Activated T-helper 1 cell treated with anti-CD3 and anti-CD28 coated beads, Interleukin-12 subunit alpha, Interleukin-12 subunit beta, Interleukin-2, Interleukin-4 antibody, amounts not matched to agents 30 ng/mL and 10 ng/mL and 1 ng/mL, durations not matched to agents 14 hours and 24 hours and 36 hours (primary cell): ENCODE measurements at regions of chr9 and their contacts with region 1.

Region 1: DNA sequence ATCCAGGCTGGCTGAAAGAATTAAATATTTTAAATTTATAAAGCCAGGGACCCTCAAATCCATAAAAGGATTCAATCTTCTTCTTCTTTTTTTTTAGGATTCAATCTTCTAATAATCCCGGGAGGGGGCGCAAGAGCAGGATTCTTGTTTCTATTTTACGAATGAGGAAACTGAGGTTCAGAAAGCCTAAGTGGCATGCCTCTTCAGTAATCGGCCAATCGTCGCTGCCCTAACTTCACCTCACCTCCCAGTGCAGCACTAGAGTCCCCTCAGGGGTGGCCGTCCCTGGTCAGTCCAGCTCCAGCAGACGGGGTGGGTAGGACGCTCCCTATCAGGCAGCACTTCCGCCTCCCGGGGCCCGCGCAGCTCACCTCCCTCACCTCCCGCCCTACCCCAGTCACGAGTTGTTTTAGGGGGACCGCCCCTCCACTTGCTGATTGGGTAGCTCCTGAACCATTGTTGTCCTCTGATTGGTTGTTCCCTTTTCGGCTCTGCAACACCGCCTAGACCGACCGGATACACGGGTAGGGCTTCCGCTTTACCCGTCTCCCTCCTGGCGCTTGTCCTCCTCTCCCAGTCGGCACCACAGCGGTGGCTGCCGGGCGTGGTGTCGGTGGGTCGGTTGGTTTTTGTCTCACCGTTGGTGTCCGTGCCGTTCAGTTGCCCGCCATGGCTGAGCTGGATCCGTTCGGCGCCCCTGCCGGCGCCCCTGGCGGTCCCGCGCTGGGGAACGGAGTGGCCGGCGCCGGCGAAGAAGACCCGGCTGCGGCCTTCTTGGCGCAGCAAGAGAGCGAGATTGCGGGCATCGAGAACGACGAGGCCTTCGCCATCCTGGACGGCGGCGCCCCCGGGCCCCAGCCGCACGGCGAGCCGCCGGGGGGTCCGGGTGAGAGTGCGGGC is at the start of gene CLTA:
- DNase-seq: peak; percentile 94
- H3K4me3 Mint-ChIP-seq: peak within 1 kb of the TSS; percentile 96
- H3K27ac Mint-ChIP-seq: peak within 1 kb of the TSS; percentile 78
- H3K4me1 Mint-ChIP-seq: peaks cover 56% of the 10 kb centered on the region
- H3K27me3 Mint-ChIP-seq: peaks cover 4% of the 10 kb centered on the region
- total RNA-seq, gene CLTA: 175 and 182 TPM in 2 replicates

Region 2: DNA sequence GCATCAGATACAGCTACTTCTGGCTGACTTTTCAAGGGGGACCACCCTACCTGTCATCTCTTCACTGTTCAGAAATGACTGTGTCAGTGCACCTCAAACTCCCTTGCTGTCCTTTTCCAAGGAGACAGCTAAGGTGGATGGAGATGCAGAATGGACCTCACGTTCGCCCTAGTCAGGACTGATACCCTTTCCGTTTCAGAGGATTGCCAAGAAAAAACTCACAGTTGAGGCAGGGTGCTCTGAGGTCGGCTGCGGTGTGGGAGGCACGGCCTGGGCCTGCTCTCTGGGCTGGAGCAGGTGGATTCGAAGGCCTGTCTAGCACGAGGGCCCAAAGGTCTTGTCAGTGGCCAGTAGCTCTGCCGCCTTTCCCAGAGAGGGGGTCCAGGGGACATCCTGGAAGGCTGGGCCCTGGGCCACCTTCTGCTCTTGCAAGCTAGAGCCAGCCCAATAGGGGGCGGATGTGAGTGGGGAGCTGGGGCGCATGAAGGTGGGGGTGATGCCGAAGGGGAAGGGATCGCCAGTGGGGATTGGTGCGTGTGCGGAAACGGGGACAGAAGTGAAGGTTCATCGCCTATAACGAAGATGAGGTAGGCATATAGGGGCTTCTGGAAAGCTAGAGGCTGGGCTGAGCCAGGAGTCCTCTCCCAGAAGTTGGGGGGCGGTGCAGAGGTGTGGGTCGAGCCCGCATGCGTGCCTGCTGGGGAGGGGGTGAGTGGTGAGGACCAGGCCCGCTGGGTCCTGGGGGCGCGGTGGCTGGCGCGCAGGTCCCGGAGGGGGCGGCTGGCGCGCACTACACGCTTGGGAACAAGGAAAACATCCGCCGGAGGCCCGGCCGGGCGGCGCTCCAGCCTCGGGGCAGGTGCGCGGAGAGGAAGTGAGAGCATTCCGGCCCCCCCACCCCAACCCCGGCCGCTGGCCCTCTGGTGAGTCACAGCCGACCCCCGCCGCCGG is 434.1 kb before region 1 on chr9:
- intact Hi-C with region 1: loop called (anchors 5 kb)
- DNase-seq: peak; percentile 71
- H3K4me3 Mint-ChIP-seq: peak overlapping the region; percentile 100
- H3K27ac Mint-ChIP-seq: peak overlapping the region; percentile 98
- H3K4me1 Mint-ChIP-seq: peaks cover 51% of the 10 kb centered on the region
- H3K27me3 Mint-ChIP-seq: no peaks in the 10 kb centered on the region

Region 3: GRCh38 chr9:35801328-35802128 is 389.1 kb before region 1 on chr9:
- intact Hi-C with region 1: no loop called
- DNase-seq: no peak
- H3K4me3 Mint-ChIP-seq: no peak overlapping the region
- H3K27ac Mint-ChIP-seq: no peak overlapping the region
- H3K4me1 Mint-ChIP-seq: peaks cover 20% of the 10 kb centered on the region
- H3K27me3 Mint-ChIP-seq: no peaks in the 10 kb centered on the region

Region 4: GRCh38 chr9:36036780-36037548 is 153.7 kb before region 1 on chr9 and contains the start of gene RECK:
- intact Hi-C with region 1: loop called (anchors 2 kb)
- DNase-seq: peak; percentile 84
- H3K4me3 Mint-ChIP-seq: peak within 1 kb of the TSS; percentile 90
- H3K27ac Mint-ChIP-seq: peak within 1 kb of the TSS; percentile 80
- H3K4me1 Mint-ChIP-seq: peaks cover 34% of the 10 kb centered on the region
- H3K27me3 Mint-ChIP-seq: peaks cover 24% of the 10 kb centered on the region
- total RNA-seq, gene RECK: 3.8 and 4.4 TPM in 2 replicates

Region 5: DNA sequence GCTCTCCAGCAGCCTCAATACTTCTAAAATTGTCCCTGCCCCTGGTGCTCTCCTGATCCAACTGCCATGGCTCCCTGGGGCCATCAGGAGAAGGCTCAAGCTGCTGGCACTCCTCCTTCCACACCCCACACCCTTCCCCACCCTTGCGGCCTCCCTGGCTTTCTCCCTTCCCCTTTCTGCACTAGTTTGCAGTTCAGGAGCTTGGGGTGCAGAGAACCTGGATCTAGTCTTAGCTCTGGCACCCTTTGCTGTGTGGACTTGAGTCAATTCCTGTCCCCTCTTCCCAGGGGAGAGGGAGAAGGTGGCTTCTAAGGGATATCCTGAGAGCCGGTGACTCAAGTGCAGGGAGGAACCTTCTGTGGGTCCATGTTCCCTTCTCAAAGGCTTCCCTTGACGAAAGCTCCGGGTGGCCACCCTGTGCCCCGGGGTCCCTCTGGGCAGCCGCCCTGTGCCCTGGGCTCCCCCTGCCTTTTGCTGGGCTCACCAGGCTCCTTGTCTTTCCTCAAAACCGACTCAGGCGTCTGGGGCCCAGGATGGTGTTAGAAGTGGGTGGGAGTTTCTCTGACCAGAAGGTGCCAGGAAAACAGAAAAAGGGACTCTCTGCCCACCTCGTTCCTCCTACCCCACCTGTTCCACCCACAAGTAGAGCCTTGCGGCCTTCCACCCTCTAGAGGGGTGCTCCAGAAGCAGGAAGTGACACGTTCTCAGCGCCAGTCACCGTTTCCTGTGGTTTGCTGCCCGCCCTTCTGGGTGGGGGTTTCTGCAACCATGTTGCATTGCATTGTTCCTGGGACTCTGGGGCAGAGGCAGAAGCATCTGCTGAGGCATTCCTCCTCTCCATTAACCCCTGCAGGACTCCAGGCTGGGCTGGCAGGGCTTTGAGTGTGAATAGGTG is 39.1 kb before region 1 on chr9:
- intact Hi-C with region 1: loop called (anchors 1 kb)
- DNase-seq: peak; percentile 84
- H3K4me3 Mint-ChIP-seq: peak overlapping the region; percentile 77
- H3K27ac Mint-ChIP-seq: peak overlapping the region; percentile 96
- H3K4me1 Mint-ChIP-seq: peaks cover 64% of the 10 kb centered on the region
- H3K27me3 Mint-ChIP-seq: no peaks in the 10 kb centered on the region

Region 6: DNA sequence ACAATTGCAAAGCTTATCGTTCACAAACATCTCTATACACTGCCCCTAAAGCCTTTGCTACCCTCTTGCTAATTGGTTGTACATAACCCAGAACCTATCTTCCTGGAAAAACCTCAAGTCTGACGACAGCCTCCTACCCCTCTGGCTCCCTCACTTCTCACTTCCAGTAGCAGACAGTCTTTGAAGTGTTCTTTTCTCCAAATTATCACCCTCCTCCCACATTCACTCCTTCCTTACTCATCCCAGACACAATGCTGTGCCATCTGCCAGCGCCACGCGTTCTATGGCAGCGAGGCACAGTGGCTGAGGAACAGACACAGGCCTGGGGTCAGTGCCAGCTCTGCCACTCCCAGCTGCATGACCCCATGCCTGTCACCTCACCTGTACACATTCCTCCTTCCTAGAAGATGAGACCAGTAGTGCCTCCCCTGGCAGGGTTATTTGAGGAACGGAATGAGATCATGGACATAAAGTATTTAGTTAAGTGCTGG is 27.8 kb after region 1 on chr9:
- intact Hi-C with region 1: loop called (anchors 1 kb)
- DNase-seq: peak; percentile 17
- H3K4me3 Mint-ChIP-seq: peak overlapping the region; percentile 71
- H3K27ac Mint-ChIP-seq: peak overlapping the region; percentile 90
- H3K4me1 Mint-ChIP-seq: peaks cover 37% of the 10 kb centered on the region
- H3K27me3 Mint-ChIP-seq: no peaks in the 10 kb centered on the region

Region 7: DNA sequence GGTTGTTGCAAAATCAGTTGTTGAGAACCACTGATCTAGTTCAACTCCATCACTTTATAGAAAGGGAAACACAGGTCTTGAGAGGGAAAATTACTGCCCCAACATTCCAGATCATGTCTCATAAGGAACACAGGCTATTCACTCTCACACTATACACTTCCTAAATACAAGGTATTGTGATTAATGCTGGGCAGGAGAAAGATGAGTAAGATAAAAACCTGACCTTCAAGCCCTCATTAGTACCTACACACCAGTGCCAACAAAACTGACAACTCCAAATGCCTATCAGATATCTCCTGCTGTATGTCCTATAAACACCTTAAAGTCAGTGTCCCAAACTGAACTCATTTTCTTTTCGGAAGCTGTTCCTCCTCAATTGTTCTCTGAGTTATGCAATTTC is 59.4 kb after region 1 on chr9:
- intact Hi-C with region 1: no loop called
- DNase-seq: no peak
- H3K4me3 Mint-ChIP-seq: no peak overlapping the region
- H3K27ac Mint-ChIP-seq: no peak overlapping the region
- H3K4me1 Mint-ChIP-seq: peaks cover 20% of the 10 kb centered on the region
- H3K27me3 Mint-ChIP-seq: no peaks in the 10 kb centered on the region

Region 8: DNA sequence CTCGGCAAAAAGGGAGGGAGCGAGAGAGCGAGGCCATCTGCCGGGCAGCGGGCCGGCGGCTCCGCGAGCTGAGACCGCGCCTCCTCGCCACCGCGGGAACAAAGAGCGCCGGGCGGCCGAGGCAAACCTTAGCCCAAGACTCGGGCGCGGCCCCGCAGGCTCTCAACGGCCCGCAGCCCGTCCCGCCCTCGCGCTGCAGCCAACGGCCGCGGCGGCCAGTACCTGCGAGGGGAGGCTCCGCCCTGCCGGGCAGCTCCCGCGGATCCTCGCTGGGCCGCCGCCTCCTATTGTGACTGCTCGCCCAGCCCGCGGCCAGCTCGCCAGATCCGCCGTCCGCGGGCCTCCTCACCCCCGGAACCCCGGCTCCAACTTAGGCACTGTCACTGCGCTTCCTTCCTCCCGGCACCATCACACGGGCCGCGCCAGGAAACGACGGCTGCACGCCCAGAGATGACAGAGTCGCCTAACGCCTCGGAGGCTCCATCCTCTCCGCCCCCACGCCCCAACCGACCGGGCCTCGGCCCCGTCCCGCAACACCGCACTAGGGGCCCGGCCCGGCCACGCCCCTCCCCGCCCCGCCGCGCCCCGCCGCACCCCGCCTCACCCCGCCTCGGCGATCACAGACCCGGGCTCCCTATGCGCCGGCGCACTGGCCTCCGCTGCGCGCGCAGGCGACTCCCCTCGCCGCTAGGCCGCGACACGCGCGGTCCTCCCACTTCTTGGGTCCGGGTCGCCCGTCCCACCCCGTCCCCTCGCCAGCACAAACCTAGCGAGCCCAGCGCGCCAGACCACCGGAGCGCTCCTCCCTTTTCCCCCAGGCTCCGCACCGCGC is 209.9 kb after region 1 on chr9:
- intact Hi-C with region 1: loop called (anchors 1 kb)
- DNase-seq: peak; percentile 86
- H3K4me3 Mint-ChIP-seq: peak overlapping the region; percentile 89
- H3K27ac Mint-ChIP-seq: peak overlapping the region; percentile 97
- H3K4me1 Mint-ChIP-seq: peaks cover 47% of the 10 kb centered on the region
- H3K27me3 Mint-ChIP-seq: no peaks in the 10 kb centered on the region

Region 9: DNA sequence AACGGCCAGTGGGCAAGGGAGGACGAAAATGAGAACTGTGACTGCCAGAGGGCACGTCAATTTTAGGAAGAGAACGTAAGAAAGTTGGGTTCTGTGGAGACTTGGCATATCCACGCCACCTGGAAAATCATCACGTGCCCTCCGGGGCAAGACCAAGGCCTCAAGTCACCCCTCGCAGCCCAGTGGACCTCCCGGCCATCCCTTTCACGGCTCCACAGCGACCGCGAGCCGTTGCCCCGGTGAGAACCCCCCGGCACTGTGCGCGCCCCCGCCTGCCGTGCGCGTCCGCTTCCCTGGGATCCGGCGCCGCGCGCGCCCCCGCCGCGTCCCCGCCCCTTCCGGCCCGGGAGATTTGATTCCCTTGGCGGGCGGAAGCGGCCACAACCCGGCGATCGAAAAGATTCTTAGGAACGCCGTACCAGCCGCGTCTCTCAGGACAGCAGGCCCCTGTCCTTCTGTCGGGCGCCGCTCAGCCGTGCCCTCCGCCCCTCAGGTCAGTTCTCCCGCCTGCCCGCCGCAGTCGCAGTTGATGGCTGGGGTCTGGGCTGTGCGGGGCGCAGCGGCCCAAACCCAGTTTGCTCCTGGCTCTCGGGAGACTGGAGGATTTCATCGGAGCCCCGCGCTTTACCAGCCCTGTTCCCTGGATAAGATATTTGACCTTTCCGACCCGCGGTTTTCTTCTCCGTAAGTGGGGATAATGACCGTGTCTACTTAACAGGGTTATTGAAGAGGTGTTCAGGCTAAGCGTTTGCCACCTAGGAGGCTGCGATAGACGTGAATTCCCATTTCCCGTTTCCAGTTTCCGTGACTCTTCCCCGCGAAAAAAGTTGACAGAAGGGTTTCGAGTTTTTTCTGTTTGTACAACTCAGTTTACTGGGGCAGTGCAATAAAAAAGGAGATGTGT is 382.1 kb after region 1 on chr9 and contains the start of gene MELK:
- intact Hi-C with region 1: no loop called
- DNase-seq: peak; percentile 86
- H3K4me3 Mint-ChIP-seq: peak within 1 kb of the TSS; percentile 97
- H3K27ac Mint-ChIP-seq: peak within 1 kb of the TSS; percentile 91
- H3K4me1 Mint-ChIP-seq: peaks cover 26% of the 10 kb centered on the region
- H3K27me3 Mint-ChIP-seq: peaks cover 2% of the 10 kb centered on the region
- total RNA-seq, gene MELK: 46.4 and 48.3 TPM in 2 replicates